HCT116 (cell line): ENCODE measurements at regions of chr1 and their contacts with region 1.

Region 1: DNA sequence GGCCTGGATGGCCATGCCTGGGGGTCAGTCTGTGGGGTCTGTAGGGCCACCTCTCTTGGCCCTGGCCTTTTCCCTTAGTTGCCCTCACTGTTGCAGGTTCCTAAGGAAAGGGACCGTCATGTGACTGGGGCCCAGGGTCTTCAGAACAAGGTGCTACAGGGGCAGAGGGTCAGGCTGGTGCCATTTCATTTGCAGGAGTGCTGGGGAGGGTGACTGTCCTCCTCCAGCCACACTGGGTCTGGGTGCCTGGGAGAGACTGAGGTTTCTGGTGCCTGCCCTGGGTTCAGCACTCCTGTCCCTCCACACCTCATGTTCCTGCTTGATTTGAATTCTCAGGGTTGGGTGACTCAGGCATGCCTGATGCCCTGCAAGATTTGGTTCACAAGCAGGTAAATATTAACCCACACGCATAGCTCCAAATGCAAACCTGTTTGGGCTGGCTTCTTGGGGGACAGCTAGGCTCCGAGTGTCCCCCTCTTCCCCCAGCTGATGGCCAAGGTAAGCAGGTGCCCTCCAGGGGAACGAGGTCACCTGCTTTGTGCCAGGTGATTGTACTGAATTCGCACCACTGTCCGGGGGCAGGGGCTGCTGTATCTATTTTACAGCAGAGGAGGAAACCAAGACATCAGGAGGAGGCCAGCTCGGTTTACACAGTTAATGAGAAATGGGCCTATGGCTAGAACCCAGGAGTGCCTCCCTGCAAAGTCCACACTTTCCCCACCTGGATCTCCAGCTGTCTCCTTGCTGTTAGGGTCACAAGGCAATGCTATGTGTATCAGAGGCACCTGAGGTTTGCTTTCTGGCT is 20.3 kb downstream of the ARHGEF10L start:
- DNase-seq: no peak
- ATAC-seq: no peak
- H3K4me3 ChIP-seq: no peak overlapping the region
- H3K27ac ChIP-seq: no peak overlapping the region
- H3K4me1 ChIP-seq: peaks cover 26 to 51% of the 10 kb centered on the region in 2 experiments
- H3K27me3 ChIP-seq: no peaks in the 10 kb centered on the region
- CTCF ChIP-seq: no peak
- POLR2A ChIP-seq: no peak
- RAD21 ChIP-seq: no peak

Region 2: GRCh38 chr1:17540255-17541001 is 19.4 kb before region 1 on chr1:
- CTCF ChIA-PET with region 1: no interaction called
- POLR2A ChIA-PET with region 1: interaction called, 3 read pairs
- RAD21 ChIA-PET with region 1: interaction called in 1 of 2 experiments, 4 read pairs
- intact Hi-C with region 1: loop called (anchors 1 kb)
- DNase-seq: no peak
- ATAC-seq: peak; percentile 61
- H3K4me3 ChIP-seq: peak overlapping the region; percentile 74 to 94
- H3K27ac ChIP-seq: peak overlapping the region; percentile 84
- H3K4me1 ChIP-seq: peaks cover 11 to 49% of the 10 kb centered on the region in 2 experiments
- H3K27me3 ChIP-seq: no peaks in the 10 kb centered on the region
- CTCF ChIP-seq: no peak
- POLR2A ChIP-seq: no peak
- RAD21 ChIP-seq: no peak